ENCODE measurements at regions of chr9 and their contacts with region 1.

Region 1: GRCh38 chr9:76996700-76997099 is 22.8 kb upstream of the FOXB2 start:
- DNase-seq: peak in 1 of 2 donors; percentile 74
- H3K4me3 ChIP-seq: no peak overlapping the region
- H3K27ac ChIP-seq: no peak overlapping the region
- H3K4me1 ChIP-seq: no peaks in the 10 kb centered on the region
- H3K27me3 ChIP-seq: no peaks in the 10 kb centered on the region
- CTCF ChIP-seq: peak; percentile 44 to 68 (median 48)

Region 2: DNA sequence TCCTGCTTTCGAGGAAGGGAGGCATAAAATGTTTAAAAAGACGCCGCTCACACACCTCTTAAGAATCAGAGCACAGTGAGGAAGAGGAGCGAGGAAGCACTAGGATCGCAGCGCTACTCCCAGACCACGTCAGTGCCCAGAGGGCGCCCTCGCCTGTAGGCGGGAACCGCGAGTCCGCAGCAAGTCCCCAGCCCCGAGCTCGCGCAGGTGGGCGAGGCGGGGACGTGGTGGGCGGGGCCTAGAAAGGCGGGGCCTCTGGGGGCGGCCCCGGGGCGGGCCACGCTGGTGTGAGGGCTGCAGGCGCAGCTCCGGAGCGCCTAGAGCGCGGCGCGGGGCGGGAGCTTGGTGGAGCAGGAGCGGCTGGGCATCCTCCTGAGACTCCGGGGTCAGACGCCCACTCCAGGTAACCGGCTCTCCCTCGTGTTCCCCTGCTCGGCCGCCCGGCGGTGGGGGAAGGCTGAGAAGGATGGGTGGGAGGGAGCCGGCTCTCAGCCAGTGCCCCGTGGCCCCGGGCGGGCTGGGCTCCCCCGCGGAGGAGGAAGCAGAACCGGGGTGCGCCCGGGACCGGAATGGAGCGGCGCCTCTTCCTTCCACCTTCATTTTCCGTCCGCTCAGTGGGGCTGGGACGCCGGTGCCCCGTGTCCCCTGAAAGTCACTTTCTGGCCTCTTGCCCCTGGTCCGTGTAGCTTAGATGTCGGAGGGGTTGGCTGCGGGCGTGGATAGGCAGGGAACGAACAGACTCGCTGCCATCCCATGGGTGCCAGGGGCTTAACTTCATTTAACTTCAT is 537.6 kb before region 1 on chr9 and contains the start of gene GCNT1:
- intact Hi-C with region 1: loop called (anchors 5 kb)
- DNase-seq: peak; percentile 60 to 85
- H3K4me3 ChIP-seq: peak within 1 kb of the TSS; percentile 53 to 83
- H3K27ac ChIP-seq: peak within 1 kb of the TSS in 1 of 2 donors; percentile 26
- H3K4me1 ChIP-seq: peaks cover 3 to 5% of the 10 kb centered on the region in 2 donors
- H3K27me3 ChIP-seq: no peaks in the 10 kb centered on the region
- CTCF ChIP-seq: peak in 2 of 3 experiments; percentile 14 to 49
- total RNA-seq, gene GCNT1: 0.21 TPM